Vagina (tissue), 2 donors: ENCODE measurements at regions of chr1 and their contacts with region 1.

Region 1: GRCh38 chr1:201703621-201704439 is 125.1 kb upstream of the IPO9 start:
- DNase-seq: no peak
- H3K4me3 ChIP-seq: no peak overlapping the region
- H3K27ac ChIP-seq: peak overlapping the region; percentile 83
- H3K4me1 ChIP-seq: peaks cover 21% of the 10 kb centered on the region
- H3K27me3 ChIP-seq: no peaks in the 10 kb centered on the region
- CTCF ChIP-seq: peak; percentile 94 to 96 (median 95)
- POLR2A ChIP-seq: no peak

Region 2: DNA sequence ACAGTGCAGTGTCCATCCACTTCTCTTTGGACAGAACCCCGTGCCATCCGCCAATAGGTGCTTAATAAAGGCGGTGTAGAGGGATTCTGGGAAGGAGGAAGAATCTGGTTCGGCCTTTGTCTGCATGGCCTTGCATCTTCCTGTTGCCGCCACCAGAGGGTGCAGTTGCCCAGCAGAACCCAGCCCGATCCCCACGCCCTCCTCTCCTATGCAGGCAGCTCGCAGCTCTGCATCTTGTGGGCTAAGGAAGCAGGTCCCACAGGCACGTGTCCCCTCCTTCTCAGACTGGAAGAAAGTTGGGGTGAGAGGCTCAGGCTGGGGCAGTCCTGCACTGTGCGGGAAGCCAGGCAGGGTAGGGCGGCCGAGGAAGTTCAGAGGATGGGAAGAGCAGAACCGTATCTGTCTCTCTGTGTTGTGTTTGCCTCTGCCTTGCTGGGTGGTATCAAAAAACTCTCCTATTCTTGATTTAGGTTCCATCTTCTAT is 144.1 kb before region 1 on chr1:
- intact Hi-C with region 1: loop called (anchors 1 kb)
- DNase-seq: no peak
- H3K4me3 ChIP-seq: no peak overlapping the region
- H3K27ac ChIP-seq: peak overlapping the region; percentile 6
- H3K4me1 ChIP-seq: peaks cover 54% of the 10 kb centered on the region
- H3K27me3 ChIP-seq: no peaks in the 10 kb centered on the region
- CTCF ChIP-seq: peak; percentile 97 to 98 (median 98)
- POLR2A ChIP-seq: no peak

Region 3: GRCh38 chr1:202085682-202086404 is 382.0 kb after region 1 on chr1:
- intact Hi-C with region 1: no loop called
- DNase-seq: no peak
- H3K4me3 ChIP-seq: no peak overlapping the region
- H3K27ac ChIP-seq: no peak overlapping the region
- H3K4me1 ChIP-seq: peaks cover 25% of the 10 kb centered on the region
- H3K27me3 ChIP-seq: no peaks in the 10 kb centered on the region
- CTCF ChIP-seq: no peak
- POLR2A ChIP-seq: no peak